B cell (primary cell): ENCODE measurements at regions of chr6 and their contacts with region 1.

Region 1: DNA sequence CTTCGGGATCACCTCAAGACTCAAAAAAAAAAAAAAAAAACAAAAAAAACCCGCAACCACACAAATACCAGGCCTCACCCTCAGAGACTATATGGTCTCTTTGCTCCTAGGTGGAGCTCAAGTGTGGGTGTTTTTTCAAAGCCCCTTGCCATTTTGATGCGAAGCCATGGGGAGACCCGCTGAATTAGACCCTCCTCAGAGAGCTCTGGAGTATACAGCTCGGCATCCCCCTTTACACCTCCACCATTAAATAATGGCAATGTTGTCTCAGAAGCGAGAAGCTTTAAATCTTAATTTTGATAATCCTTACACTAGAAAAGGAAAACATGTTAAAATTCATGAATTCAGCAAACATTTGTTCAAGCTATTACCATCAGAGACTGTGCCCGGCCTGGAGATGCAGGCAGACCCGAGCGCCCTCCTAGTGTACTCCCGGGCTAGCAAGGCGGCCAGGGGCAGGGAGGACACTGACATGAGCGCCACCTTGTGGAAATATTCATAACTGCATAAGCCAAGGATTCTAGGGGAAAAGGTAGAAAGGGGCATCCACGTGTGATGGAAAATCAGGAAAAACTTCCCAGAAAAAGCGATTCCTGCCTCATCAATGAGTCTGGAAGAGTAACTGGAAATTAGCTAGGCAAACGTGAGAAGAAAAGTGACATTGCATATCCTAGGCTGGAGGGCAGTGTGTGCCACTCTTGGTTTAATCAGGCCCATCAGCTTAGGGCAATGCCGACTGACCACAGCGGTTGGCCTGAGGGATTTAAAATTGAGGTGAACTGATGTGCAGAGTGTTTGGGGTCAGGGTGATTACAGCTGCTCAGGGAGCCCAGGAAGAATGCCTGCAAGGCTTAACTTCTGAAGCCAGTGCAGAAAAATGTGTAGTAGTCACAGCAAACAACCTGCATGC is 72.5 kb downstream of the B3GAT2 start:
- DNase-seq: peak; percentile 66
- ATAC-seq: peak; percentile 86
- H3K4me3 ChIP-seq: no peak overlapping the region
- H3K4me3 Mint-ChIP-seq: no peak overlapping the region
- H3K27ac ChIP-seq: no peak overlapping the region
- H3K27ac Mint-ChIP-seq: no peak overlapping the region
- H3K4me1 ChIP-seq: no peaks in the 10 kb centered on the region
- H3K4me1 Mint-ChIP-seq: no peaks in the 10 kb centered on the region
- H3K27me3 ChIP-seq: peaks cover 0 to 9% (median 0%) of the 10 kb centered on the region in 4 experiments
- H3K27me3 Mint-ChIP-seq: peaks cover 7% of the 10 kb centered on the region
- CTCF ChIP-seq: peak; percentile 99

Region 2: GRCh38 chr6:70221025-70221714 is 663.2 kb before region 1 on chr6:
- CTCF ChIA-PET with region 1: interaction called, 27 read pairs
- POLR2A ChIA-PET with region 1: no interaction called
- intact Hi-C with region 1: no loop called
- DNase-seq: peak; percentile 42
- ATAC-seq: peak; percentile 39
- H3K4me3 ChIP-seq: no peak overlapping the region
- H3K4me3 Mint-ChIP-seq: no peak overlapping the region
- H3K27ac ChIP-seq: no peak overlapping the region
- H3K27ac Mint-ChIP-seq: no peak overlapping the region
- H3K4me1 ChIP-seq: peaks cover 6 to 9% of the 10 kb centered on the region in 2 donors
- H3K4me1 Mint-ChIP-seq: peaks cover 8% of the 10 kb centered on the region
- H3K27me3 ChIP-seq: no peaks in the 10 kb centered on the region
- H3K27me3 Mint-ChIP-seq: peaks cover 7% of the 10 kb centered on the region
- CTCF ChIP-seq: peak; percentile 94

Region 3: GRCh38 chr6:70520575-70520974 is 363.8 kb before region 1 on chr6:
- CTCF ChIA-PET with region 1: interaction called, 14 read pairs
- POLR2A ChIA-PET with region 1: no interaction called
- intact Hi-C with region 1: loop called (anchors 1 kb)
- DNase-seq: peak; percentile 22
- ATAC-seq: no peak
- H3K4me3 ChIP-seq: no peak overlapping the region
- H3K4me3 Mint-ChIP-seq: no peak overlapping the region
- H3K27ac ChIP-seq: no peak overlapping the region
- H3K27ac Mint-ChIP-seq: no peak overlapping the region
- H3K4me1 ChIP-seq: no peaks in the 10 kb centered on the region
- H3K4me1 Mint-ChIP-seq: no peaks in the 10 kb centered on the region
- H3K27me3 ChIP-seq: no peaks in the 10 kb centered on the region
- H3K27me3 Mint-ChIP-seq: no peaks in the 10 kb centered on the region
- CTCF ChIP-seq: peak; percentile 64

Region 4: GRCh38 chr6:70700922-70701876 is 183.1 kb before region 1 on chr6:
- CTCF ChIA-PET with region 1: interaction called, 52 read pairs
- POLR2A ChIA-PET with region 1: no interaction called
- intact Hi-C with region 1: loop called (anchors 1 kb)
- DNase-seq: no peak
- ATAC-seq: no peak
- H3K4me3 ChIP-seq: no peak overlapping the region
- H3K4me3 Mint-ChIP-seq: no peak overlapping the region
- H3K27ac ChIP-seq: no peak overlapping the region
- H3K27ac Mint-ChIP-seq: no peak overlapping the region
- H3K4me1 ChIP-seq: no peaks in the 10 kb centered on the region
- H3K4me1 Mint-ChIP-seq: peaks cover 21% of the 10 kb centered on the region
- H3K27me3 ChIP-seq: no peaks in the 10 kb centered on the region
- H3K27me3 Mint-ChIP-seq: no peaks in the 10 kb centered on the region
- CTCF ChIP-seq: no peak

Region 5: GRCh38 chr6:70725817-70726415 is 158.4 kb before region 1 on chr6:
- CTCF ChIA-PET with region 1: interaction called, 10 read pairs
- POLR2A ChIA-PET with region 1: no interaction called
- intact Hi-C with region 1: no loop called
- DNase-seq: no peak
- ATAC-seq: no peak
- H3K4me3 ChIP-seq: no peak overlapping the region
- H3K4me3 Mint-ChIP-seq: no peak overlapping the region
- H3K27ac ChIP-seq: no peak overlapping the region
- H3K27ac Mint-ChIP-seq: no peak overlapping the region
- H3K4me1 ChIP-seq: no peaks in the 10 kb centered on the region
- H3K4me1 Mint-ChIP-seq: peaks cover 28% of the 10 kb centered on the region
- H3K27me3 ChIP-seq: no peaks in the 10 kb centered on the region
- H3K27me3 Mint-ChIP-seq: no peaks in the 10 kb centered on the region
- CTCF ChIP-seq: no peak

Region 6: DNA sequence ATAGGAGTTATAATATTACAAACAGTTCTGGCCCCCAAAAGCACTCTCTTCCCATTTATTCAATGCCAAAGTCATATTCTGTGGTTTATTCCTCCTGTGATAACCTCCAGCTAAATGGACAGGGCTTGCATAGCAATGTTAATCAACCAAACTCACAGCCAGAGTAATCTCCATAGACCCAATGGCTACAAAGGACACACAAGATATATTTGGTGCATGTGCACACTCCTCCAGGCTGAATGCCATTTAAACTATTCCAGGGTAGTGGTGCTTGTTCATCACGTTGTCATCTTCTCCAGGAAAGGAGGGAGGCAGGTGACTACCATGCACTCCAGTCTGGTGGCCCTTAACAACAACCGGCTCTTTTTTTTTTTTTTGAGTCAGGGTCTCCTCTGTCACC is 15.7 kb after region 1 on chr6:
- CTCF ChIA-PET with region 1: interaction called, 21 read pairs
- POLR2A ChIA-PET with region 1: no interaction called
- intact Hi-C with region 1: no loop called
- DNase-seq: no peak
- ATAC-seq: no peak
- H3K4me3 ChIP-seq: no peak overlapping the region
- H3K4me3 Mint-ChIP-seq: no peak overlapping the region
- H3K27ac ChIP-seq: no peak overlapping the region
- H3K27ac Mint-ChIP-seq: no peak overlapping the region
- H3K4me1 ChIP-seq: no peaks in the 10 kb centered on the region
- H3K4me1 Mint-ChIP-seq: no peaks in the 10 kb centered on the region
- H3K27me3 ChIP-seq: peaks cover 0 to 6% (median 1%) of the 10 kb centered on the region in 4 experiments
- H3K27me3 Mint-ChIP-seq: peaks cover 27% of the 10 kb centered on the region
- CTCF ChIP-seq: no peak